Activated naive CD4-positive, alpha-beta T cell treated with anti-CD3 and anti-CD28 coated beads for 36 hours (primary cell): ENCODE measurements at regions of chr2 and their contacts with region 1.

Region 1: GRCh38 chr2:100741880-100742276 is 78.1 kb upstream of the NPAS2 start:
- DNase-seq: no peak
- H3K4me3 Mint-ChIP-seq: no peak overlapping the region
- H3K27ac Mint-ChIP-seq: no peak overlapping the region
- H3K4me1 Mint-ChIP-seq: peaks cover 12% of the 10 kb centered on the region
- H3K27me3 Mint-ChIP-seq: no peaks in the 10 kb centered on the region

Region 2: DNA sequence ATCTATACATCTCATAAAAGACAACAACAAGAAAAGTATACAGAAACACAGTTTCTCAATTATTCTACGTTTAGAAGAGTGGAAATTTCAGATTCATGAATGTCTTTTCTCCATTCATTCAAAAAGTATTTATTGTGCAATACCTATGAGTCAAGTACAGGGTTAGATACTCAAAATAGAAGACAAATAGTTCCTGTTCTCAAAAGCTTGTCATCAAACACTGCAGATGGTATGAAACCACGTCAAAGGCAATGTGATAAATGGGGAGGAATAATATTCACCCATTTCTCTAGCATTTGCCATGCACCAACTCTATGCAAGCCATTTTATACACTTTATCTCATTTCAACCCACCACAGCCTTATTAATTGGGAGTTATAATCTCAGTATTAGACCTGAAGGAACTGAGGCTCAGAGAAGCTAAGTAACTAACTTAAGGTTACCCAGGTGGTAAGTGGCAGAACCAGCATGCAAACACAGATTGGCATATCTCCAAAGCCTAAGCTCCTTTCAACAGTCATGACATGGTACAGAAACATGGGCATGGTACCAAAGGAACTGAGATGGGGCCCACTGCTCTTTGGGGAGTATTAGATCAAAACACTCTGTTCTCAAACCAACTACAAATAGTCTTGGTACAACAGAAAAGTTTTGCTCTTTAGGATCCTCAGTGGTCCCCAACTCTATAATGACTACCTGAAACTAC is 10.9 kb after region 1 on chr2:
- CTCF ChIA-PET with region 1: no interaction called
- intact Hi-C with region 1: loop called (anchors 1 kb)
- DNase-seq: no peak
- H3K4me3 Mint-ChIP-seq: no peak overlapping the region
- H3K27ac Mint-ChIP-seq: peak overlapping the region; percentile 51
- H3K4me1 Mint-ChIP-seq: peaks cover 24% of the 10 kb centered on the region
- H3K27me3 Mint-ChIP-seq: peaks cover 2% of the 10 kb centered on the region